Naive thymus-derived CD4-positive, alpha-beta T cell (primary cell): ENCODE measurements at regions of chr2 and their contacts with region 1.

Region 1: DNA sequence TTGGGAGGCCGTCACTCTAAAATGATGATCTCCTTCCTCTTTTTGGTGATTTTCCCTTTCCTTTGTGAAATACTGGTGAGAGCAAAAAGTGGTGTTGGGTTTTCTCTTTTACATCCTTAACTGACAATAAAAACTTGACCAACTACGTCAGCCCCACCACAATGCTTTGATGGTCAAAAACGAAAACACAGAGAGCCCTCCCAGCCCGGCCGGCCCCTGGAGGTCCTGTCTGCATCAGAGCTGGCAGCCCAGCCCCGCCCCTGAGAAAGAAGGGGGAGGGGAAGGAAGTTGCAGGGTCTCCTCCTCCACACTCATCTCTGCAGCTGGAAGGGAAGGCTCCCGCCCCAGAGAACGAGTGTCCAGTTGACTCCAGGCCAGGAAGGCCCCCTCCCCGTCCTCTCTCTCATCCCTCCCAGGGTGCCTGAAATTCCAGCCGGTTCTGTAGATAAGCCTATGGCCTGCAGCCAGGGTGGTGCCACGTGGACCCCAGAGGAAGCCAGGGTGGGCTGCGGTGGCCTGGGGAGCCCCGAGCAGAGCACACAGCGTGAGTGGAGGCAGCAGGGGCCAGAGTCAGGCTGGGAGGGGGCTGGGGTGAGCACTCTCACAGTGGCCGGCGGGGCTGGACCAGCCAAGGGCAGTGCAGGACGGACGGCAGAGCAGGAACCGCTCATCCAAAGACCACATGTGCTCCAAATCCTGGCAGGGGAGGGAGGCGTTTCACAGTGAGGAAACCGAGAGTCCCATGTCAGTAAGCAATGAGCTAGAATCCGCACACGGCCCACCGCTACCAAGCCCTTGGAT is 19.8 kb downstream of the BIN1 start:
- DNase-seq: no peak
- ATAC-seq: peak; percentile 20
- H3K4me3 ChIP-seq: no peak overlapping the region
- H3K4me3 Mint-ChIP-seq: peak overlapping the region in 4 of 10 donors; percentile 10 to 34 (median 26)
- H3K27ac ChIP-seq: no peak overlapping the region
- H3K27ac Mint-ChIP-seq: peak overlapping the region in 8 of 9 donors; percentile 20 to 99 (median 62)
- H3K4me1 ChIP-seq: peaks cover 40 to 41% of the 10 kb centered on the region in 2 donors
- H3K4me1 Mint-ChIP-seq: peaks cover 34 to 56% (median 43%) of the 10 kb centered on the region in 7 donors
- H3K27me3 ChIP-seq: no peaks in the 10 kb centered on the region
- H3K27me3 Mint-ChIP-seq: peaks cover 0 to 9% (median 0%) of the 10 kb centered on the region in 5 donors

Region 2: DNA sequence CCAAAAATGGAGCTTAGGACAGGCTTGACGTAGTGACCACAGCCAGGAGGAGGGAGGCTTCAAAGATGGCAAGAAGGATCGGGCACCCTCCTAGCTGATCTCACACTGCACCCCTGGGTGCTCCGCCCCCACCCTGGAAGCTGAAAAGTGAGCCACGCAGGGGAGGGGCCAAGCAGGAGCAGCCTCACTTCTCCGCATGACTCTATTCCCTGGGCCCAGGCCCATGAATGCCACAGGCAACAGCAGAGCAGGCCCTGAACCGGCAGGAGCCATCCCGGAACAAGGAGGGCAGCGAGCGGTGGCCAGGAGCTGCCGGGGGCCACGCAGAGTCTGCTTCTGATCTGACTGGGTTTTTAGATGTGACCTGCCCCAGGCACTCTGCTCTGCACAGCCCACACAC is 10.3 kb before region 1 on chr2:
- CTCF ChIA-PET with region 1: interaction called, 3 read pairs
- POLR2A ChIA-PET with region 1: interaction called, 11 read pairs
- intact Hi-C with region 1: no loop called
- DNase-seq: no peak
- ATAC-seq: no peak
- H3K4me3 ChIP-seq: no peak overlapping the region
- H3K4me3 Mint-ChIP-seq: peak overlapping the region in 4 of 10 donors; percentile 14 to 95 (median 52)
- H3K27ac ChIP-seq: peak overlapping the region; percentile 89
- H3K27ac Mint-ChIP-seq: peak overlapping the region; percentile 54 to 99 (median 94)
- H3K4me1 ChIP-seq: peaks cover 39 to 50% of the 10 kb centered on the region in 2 donors
- H3K4me1 Mint-ChIP-seq: peaks cover 41 to 79% (median 59%) of the 10 kb centered on the region in 7 donors
- H3K27me3 ChIP-seq: no peaks in the 10 kb centered on the region
- H3K27me3 Mint-ChIP-seq: no peaks in the 10 kb centered on the region

Region 3: DNA sequence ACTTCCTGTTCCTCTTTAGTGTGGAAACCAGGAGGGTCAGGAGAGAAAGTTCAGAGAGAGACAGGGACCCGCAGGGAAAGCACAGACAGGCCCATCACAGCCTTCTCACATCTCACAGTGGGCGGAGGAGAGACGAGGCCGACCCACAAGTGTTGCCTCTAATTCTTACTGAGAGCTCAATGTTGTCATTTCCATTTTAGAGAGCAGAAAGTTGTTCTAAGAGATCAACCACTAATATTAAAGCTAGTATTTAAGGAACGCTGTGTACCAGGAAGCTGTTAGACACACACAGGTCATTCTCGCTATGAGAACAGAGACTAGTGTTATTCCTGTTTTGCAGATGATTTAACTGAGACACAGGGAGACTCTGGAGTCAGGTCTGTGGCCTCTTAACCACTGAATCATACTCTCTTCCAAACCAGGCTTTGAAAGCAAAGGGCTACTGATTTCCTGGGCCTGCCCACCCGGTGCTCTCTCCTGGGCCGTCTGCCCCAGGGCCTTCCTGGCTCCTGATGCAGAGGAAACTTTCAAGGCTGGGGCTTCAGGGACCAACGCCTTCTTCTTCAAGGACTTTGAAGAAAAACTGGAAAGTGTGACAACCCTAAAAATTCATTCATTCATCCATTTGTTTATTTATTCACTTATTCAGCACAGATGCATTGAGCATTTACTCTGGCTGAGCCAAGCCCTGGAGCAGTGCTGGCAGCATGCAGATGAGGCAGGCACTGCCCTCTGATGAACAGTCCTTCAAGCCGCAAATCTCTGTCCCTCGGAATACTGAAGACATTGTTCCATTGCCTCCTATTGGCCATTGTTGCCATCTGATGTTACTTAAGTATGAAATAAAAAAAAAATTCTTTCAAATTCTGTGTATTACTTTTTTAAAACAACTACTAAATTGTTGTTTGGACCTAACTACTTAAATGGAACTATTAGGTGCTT is 56.9 kb after region 1 on chr2:
- CTCF ChIA-PET with region 1: no interaction called
- POLR2A ChIA-PET with region 1: no interaction called
- intact Hi-C with region 1: no loop called
- DNase-seq: no peak
- ATAC-seq: no peak
- H3K4me3 ChIP-seq: no peak overlapping the region
- H3K4me3 Mint-ChIP-seq: no peak overlapping the region
- H3K27ac ChIP-seq: no peak overlapping the region
- H3K27ac Mint-ChIP-seq: no peak overlapping the region
- H3K4me1 ChIP-seq: no peaks in the 10 kb centered on the region
- H3K4me1 Mint-ChIP-seq: peaks cover 0 to 4% (median 0%) of the 10 kb centered on the region in 7 donors
- H3K27me3 ChIP-seq: no peaks in the 10 kb centered on the region
- H3K27me3 Mint-ChIP-seq: peaks cover 0 to 20% (median 3%) of the 10 kb centered on the region in 5 donors

Region 4: GRCh38 chr2:127293748-127294562 is 206.8 kb after region 1 on chr2 and contains the start of gene ERCC3:
- CTCF ChIA-PET with region 1: no interaction called
- POLR2A ChIA-PET with region 1: interaction called, 3 read pairs
- intact Hi-C with region 1: loop called (anchors 5 to 10 kb)
- DNase-seq: peak; percentile 54 to 81 (median 72)
- ATAC-seq: peak; percentile 93
- H3K4me3 ChIP-seq: peak within 1 kb of the TSS; percentile 87
- H3K4me3 Mint-ChIP-seq: peak within 1 kb of the TSS; percentile 92 to 99 (median 98)
- H3K27ac ChIP-seq: peak within 1 kb of the TSS; percentile 86
- H3K27ac Mint-ChIP-seq: peak within 1 kb of the TSS; percentile 77 to 97 (median 95)
- H3K4me1 ChIP-seq: peaks cover 8 to 12% of the 10 kb centered on the region in 2 donors
- H3K4me1 Mint-ChIP-seq: peaks cover 18 to 49% (median 37%) of the 10 kb centered on the region in 7 donors
- H3K27me3 ChIP-seq: no peaks in the 10 kb centered on the region
- H3K27me3 Mint-ChIP-seq: no peaks in the 10 kb centered on the region
- total RNA-seq, gene ERCC3: 43.4 to 71.5 (median 56.8) TPM

Region 5: DNA sequence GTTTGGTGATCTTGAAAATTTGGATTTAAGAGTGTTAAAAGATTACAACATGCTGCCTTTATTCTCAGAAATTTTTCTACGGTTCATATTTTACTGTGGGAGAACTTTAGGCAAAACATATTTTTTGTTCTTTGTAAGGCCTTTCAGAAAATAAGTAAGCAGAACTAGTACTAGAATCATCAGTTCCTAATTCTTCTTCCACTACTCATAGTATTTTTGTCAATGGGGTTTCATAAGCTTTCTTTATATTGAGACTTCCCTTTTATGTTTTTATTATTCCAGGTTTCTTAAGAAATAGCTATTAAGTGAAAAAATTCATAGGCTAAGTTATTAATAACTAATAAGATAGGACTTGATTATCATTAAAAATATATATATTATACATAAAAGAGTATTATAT is 1016.2 kb after region 1 on chr2:
- CTCF ChIA-PET with region 1: no interaction called
- POLR2A ChIA-PET with region 1: no interaction called
- intact Hi-C with region 1: no loop called
- DNase-seq: no peak
- ATAC-seq: no peak
- H3K4me3 ChIP-seq: no peak overlapping the region
- H3K4me3 Mint-ChIP-seq: no peak overlapping the region
- H3K27ac ChIP-seq: no peak overlapping the region
- H3K27ac Mint-ChIP-seq: peak overlapping the region in 2 of 9 donors; percentile 14 to 59
- H3K4me1 ChIP-seq: no peaks in the 10 kb centered on the region
- H3K4me1 Mint-ChIP-seq: peaks cover 10 to 25% (median 21%) of the 10 kb centered on the region in 7 donors
- H3K27me3 ChIP-seq: no peaks in the 10 kb centered on the region
- H3K27me3 Mint-ChIP-seq: no peaks in the 10 kb centered on the region